Mammary epithelial cell (primary cell): ENCODE measurements at regions of chr3 and their contacts with region 1.

Region 1: GRCh38 chr3:11434017-11434526 is 161.9 kb downstream of the ATG7 start:
- DNase-seq: no peak
- H3K4me3 ChIP-seq: no peak overlapping the region
- H3K27ac ChIP-seq: no peak overlapping the region
- H3K4me1 ChIP-seq: no peaks in the 10 kb centered on the region
- H3K27me3 ChIP-seq: no peaks in the 10 kb centered on the region
- CTCF ChIP-seq: no peak

Region 2: GRCh38 chr3:11482021-11482420 is 47.9 kb after region 1 on chr3:
- CTCF ChIA-PET with region 1: no interaction called
- dilution Hi-C with region 1: loop called (anchors 5 kb)
- in situ Hi-C with region 1: no loop called
- intact Hi-C with region 1: no loop called
- DNase-seq: no peak
- H3K4me3 ChIP-seq: no peak overlapping the region
- H3K27ac ChIP-seq: no peak overlapping the region
- H3K4me1 ChIP-seq: peaks cover 22% of the 10 kb centered on the region
- H3K27me3 ChIP-seq: no peaks in the 10 kb centered on the region
- CTCF ChIP-seq: no peak

Region 3: GRCh38 chr3:11523572-11524101 is 89.6 kb after region 1 on chr3:
- CTCF ChIA-PET with region 1: no interaction called
- dilution Hi-C with region 1: loop called (anchors 5 kb)
- in situ Hi-C with region 1: no loop called
- intact Hi-C with region 1: no loop called
- DNase-seq: no peak
- H3K4me3 ChIP-seq: no peak overlapping the region
- H3K27ac ChIP-seq: peak overlapping the region; percentile 43
- H3K4me1 ChIP-seq: peaks cover 22% of the 10 kb centered on the region
- H3K27me3 ChIP-seq: no peaks in the 10 kb centered on the region
- CTCF ChIP-seq: no peak